ENCODE measurements at regions of chr5 and their contacts with region 1.

Region 1: GRCh38 chr5:67192719-67193438 is 3.7 kb downstream of the CD180 start:
- DNase-seq: peak; percentile 73 to 84 (median 80)
- H3K4me3 ChIP-seq: peak overlapping the region; percentile 16 to 73 (median 33)
- H3K4me3 Mint-ChIP-seq: peak overlapping the region; percentile 63 to 87
- H3K27ac ChIP-seq: peak overlapping the region; percentile 90 to 93
- H3K27ac Mint-ChIP-seq: peak overlapping the region; percentile 96 to 99 (median 97)
- H3K4me1 ChIP-seq: peaks cover 93 to 100% of the 10 kb centered on the region in 2 donors
- H3K4me1 Mint-ChIP-seq: peaks cover 93% of the 10 kb centered on the region
- H3K27me3 ChIP-seq: no peaks in the 10 kb centered on the region
- H3K27me3 Mint-ChIP-seq: no peaks in the 10 kb centered on the region
- CTCF ChIP-seq: no peak

Region 2: DNA sequence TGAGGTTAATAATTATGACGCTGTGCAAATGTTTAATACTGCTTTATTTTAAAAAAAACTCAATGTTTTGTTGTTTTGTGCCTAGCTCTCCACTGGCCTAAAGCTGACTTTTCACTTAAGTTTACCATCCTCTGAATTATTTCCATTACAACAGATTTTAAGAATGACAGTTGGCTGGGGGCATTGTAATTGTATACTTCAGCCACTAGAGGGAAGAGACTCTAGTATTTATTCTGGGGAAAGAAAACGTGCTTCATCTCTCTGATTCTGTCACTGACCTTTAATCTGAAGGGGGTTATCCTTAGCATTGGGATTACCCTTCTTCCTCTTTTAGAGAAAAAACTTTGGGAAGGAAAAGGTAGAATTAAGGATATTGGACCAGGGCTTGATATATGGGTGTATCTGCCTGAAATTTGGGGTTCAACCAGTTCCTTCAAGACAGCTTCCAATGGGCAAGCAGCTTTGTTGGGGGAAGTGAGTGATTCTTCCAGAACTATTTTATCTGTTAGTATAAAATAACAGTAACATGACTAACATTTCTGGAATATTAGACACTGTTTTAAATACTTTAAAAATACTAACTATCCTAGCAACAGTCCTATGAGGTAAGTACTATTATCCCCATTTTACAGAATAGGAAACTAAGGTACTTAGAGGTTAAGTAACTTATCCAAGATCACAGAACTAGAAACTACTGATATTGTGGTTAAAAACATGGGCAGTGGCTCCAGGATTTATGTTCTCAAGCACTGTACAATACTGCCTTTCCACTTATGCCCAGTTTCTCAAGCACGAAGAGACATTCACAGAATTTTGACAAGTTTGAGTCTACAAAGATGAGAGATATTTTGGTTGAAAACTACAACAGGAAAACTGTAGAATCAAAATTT is 204.7 kb before region 1 on chr5:
- intact Hi-C with region 1: no loop called
- DNase-seq: peak in 2 of 3 donors; percentile 21 to 34
- H3K4me3 ChIP-seq: no peak overlapping the region
- H3K4me3 Mint-ChIP-seq: no peak overlapping the region
- H3K27ac ChIP-seq: no peak overlapping the region
- H3K27ac Mint-ChIP-seq: no peak overlapping the region
- H3K4me1 ChIP-seq: peaks cover 8 to 10% of the 10 kb centered on the region in 2 donors
- H3K4me1 Mint-ChIP-seq: peaks cover 10% of the 10 kb centered on the region
- H3K27me3 ChIP-seq: no peaks in the 10 kb centered on the region
- H3K27me3 Mint-ChIP-seq: peaks cover 0 to 7% (median 0%) of the 10 kb centered on the region in 3 donors
- CTCF ChIP-seq: peak; percentile 92

Region 3: DNA sequence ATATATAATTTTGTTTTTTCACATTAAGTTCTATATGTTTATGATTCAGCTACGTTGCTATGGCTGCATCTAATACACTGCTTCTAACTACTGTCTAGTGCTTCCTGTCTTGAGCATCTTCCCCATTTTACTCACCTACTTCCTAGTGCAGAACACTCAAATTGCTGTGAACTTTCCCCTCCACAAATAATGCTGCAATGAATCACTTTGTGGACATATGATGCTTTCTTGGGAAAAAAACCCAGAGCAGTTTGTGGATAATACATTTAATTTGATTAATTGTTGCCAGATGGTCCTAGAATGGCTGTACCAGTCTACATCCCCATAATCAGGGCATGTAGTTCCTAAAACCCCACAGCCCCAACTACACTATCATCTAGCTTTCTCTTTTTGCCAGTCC is 14.8 kb before region 1 on chr5:
- intact Hi-C with region 1: loop called in 1 of 2 experiments (anchors 2 kb)
- DNase-seq: peak; percentile 79 to 90 (median 88)
- H3K4me3 ChIP-seq: peak overlapping the region in 1 of 3 experiments; percentile 5
- H3K4me3 Mint-ChIP-seq: no peak overlapping the region
- H3K27ac ChIP-seq: peak overlapping the region in 1 of 2 donors; percentile 44
- H3K27ac Mint-ChIP-seq: peak overlapping the region; percentile 71 to 87 (median 79)
- H3K4me1 ChIP-seq: peaks cover 31 to 33% of the 10 kb centered on the region in 2 donors
- H3K4me1 Mint-ChIP-seq: peaks cover 37% of the 10 kb centered on the region
- H3K27me3 ChIP-seq: no peaks in the 10 kb centered on the region
- H3K27me3 Mint-ChIP-seq: peaks cover 0 to 8% (median 1%) of the 10 kb centered on the region in 3 donors
- CTCF ChIP-seq: no peak